CD14-positive monocyte (primary cell): ENCODE measurements at regions of chr5 and their contacts with region 1.

Region 1: DNA sequence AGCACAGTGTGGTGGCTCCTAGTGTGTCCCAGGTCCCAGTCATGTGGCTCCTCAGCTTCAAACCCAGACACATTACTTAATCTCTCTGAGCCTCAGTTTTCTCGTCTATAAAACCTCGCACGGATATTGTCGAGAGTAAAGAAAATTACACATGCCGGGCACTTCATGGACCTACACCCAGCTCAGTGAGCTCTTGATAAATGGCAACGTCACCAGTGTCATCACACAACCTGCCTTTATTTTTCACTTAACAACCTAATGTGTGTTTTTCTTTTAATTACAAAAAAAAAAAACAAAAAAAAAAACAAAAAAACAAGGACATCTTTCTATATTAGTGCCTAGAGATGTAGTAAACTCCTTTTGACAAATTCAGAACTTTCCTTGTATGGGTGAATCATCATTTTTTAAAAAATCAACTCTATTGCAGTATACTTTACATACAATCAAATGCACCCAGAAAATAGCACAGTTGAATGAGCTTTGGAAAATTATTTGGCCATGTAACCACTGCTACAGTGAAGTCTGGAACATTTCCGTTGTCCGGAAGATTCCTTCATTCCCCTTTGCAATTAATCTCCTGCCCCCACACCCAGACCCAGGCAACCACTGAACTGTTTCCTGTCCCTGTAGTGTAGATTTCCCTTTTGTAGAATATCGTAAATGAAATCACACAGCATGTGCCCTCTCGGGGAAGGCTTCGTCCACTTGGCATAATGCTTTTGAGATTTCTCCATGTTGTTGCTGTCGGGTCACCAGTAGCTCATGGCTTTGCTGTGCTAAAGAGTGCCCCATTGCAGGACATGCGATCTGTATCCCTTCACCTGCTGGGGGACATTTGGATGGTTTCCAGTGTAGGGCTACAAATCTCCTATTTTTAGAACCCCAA is 100.4 kb upstream of the LARP1 start:
- DNase-seq: no peak
- H3K4me3 ChIP-seq: peak overlapping the region in 1 of 3 experiments; percentile 3
- H3K4me3 Mint-ChIP-seq: peak overlapping the region; percentile 67 to 83
- H3K27ac ChIP-seq: no peak overlapping the region
- H3K27ac Mint-ChIP-seq: peak overlapping the region in 5 of 7 donors; percentile 15 to 83 (median 64)
- H3K4me1 ChIP-seq: peaks cover 15 to 21% of the 10 kb centered on the region in 2 donors
- H3K4me1 Mint-ChIP-seq: peaks cover 16% of the 10 kb centered on the region
- H3K27me3 ChIP-seq: no peaks in the 10 kb centered on the region
- H3K27me3 Mint-ChIP-seq: peaks cover 0 to 7% (median 2%) of the 10 kb centered on the region in 3 donors
- CTCF ChIP-seq: no peak

Region 2: GRCh38 chr5:154610321-154611154 is 44.2 kb before region 1 on chr5:
- intact Hi-C with region 1: no loop called
- DNase-seq: peak; percentile 35 to 56 (median 42)
- H3K4me3 ChIP-seq: no peak overlapping the region
- H3K4me3 Mint-ChIP-seq: peak overlapping the region in 1 of 2 donors; percentile 77
- H3K27ac ChIP-seq: no peak overlapping the region
- H3K27ac Mint-ChIP-seq: no peak overlapping the region
- H3K4me1 ChIP-seq: peaks cover 6 to 7% of the 10 kb centered on the region in 2 donors
- H3K4me1 Mint-ChIP-seq: peaks cover 12% of the 10 kb centered on the region
- H3K27me3 ChIP-seq: peaks cover 32 to 60% of the 10 kb centered on the region in 2 donors
- H3K27me3 Mint-ChIP-seq: peaks cover 50 to 77% (median 63%) of the 10 kb centered on the region in 3 donors
- CTCF ChIP-seq: peak; percentile 63

Region 3: GRCh38 chr5:154811653-154812365 is 157.1 kb after region 1 on chr5:
- intact Hi-C with region 1: loop called (anchors 2 to 5 kb)
- DNase-seq: peak; percentile 48 to 60 (median 59)
- H3K4me3 ChIP-seq: no peak overlapping the region
- H3K4me3 Mint-ChIP-seq: peak overlapping the region in 1 of 2 donors; percentile 16
- H3K27ac ChIP-seq: peak overlapping the region in 1 of 2 donors; percentile 48
- H3K27ac Mint-ChIP-seq: peak overlapping the region; percentile 43 to 80 (median 72)
- H3K4me1 ChIP-seq: peaks cover 11 to 18% of the 10 kb centered on the region in 2 donors
- H3K4me1 Mint-ChIP-seq: peaks cover 19% of the 10 kb centered on the region
- H3K27me3 ChIP-seq: no peaks in the 10 kb centered on the region
- H3K27me3 Mint-ChIP-seq: no peaks in the 10 kb centered on the region
- CTCF ChIP-seq: peak; percentile 92

Region 4: GRCh38 chr5:154868702-154869101 is 214.0 kb after region 1 on chr5:
- intact Hi-C with region 1: loop called in 1 of 2 experiments (anchors 10 kb)
- DNase-seq: no peak
- H3K4me3 ChIP-seq: no peak overlapping the region
- H3K4me3 Mint-ChIP-seq: no peak overlapping the region
- H3K27ac ChIP-seq: peak overlapping the region in 1 of 2 donors; percentile 53
- H3K27ac Mint-ChIP-seq: peak overlapping the region in 2 of 7 donors; percentile 41 to 59
- H3K4me1 ChIP-seq: peaks cover 0 to 1% of the 10 kb centered on the region in 2 donors
- H3K4me1 Mint-ChIP-seq: no peaks in the 10 kb centered on the region
- H3K27me3 ChIP-seq: no peaks in the 10 kb centered on the region
- H3K27me3 Mint-ChIP-seq: no peaks in the 10 kb centered on the region
- CTCF ChIP-seq: no peak

Region 5: GRCh38 chr5:154940772-154941620 is 286.3 kb after region 1 on chr5 and contains the start of gene MRPL22:
- intact Hi-C with region 1: loop called in 1 of 2 experiments (anchors 10 kb)
- DNase-seq: peak; percentile 91 to 95 (median 93)
- H3K4me3 ChIP-seq: peak within 1 kb of the TSS; percentile 75 to 91 (median 86)
- H3K4me3 Mint-ChIP-seq: peak within 1 kb of the TSS; percentile 96 to 100
- H3K27ac ChIP-seq: peak within 1 kb of the TSS; percentile 66 to 85
- H3K27ac Mint-ChIP-seq: peak within 1 kb of the TSS; percentile 89 to 98 (median 93)
- H3K4me1 ChIP-seq: peaks cover 28 to 31% of the 10 kb centered on the region in 2 donors
- H3K4me1 Mint-ChIP-seq: peaks cover 21% of the 10 kb centered on the region
- H3K27me3 ChIP-seq: no peaks in the 10 kb centered on the region
- H3K27me3 Mint-ChIP-seq: peaks cover 0 to 3% (median 0%) of the 10 kb centered on the region in 3 donors
- CTCF ChIP-seq: no peak
- polyA plus RNA-seq, gene MRPL22: 11.6 to 66.1 (median 56.7) TPM